ENCODE measurements at regions of chr17 and their contacts with region 1.

Region 1: GRCh38 chr17:1275962-1276736 is 3.3 kb upstream of the TRARG1 start:
- DNase-seq: peak; percentile 27
- ATAC-seq: peak; percentile 90
- H3K4me3 ChIP-seq: no peak overlapping the region
- H3K27ac ChIP-seq: no peak overlapping the region
- H3K4me1 ChIP-seq: no peaks in the 10 kb centered on the region
- H3K27me3 ChIP-seq: peaks cover 48% of the 10 kb centered on the region
- CTCF ChIP-seq: peak; percentile 81
- POLR2A ChIP-seq: no peak
- RAD21 ChIP-seq: peak; percentile 88

Region 2: DNA sequence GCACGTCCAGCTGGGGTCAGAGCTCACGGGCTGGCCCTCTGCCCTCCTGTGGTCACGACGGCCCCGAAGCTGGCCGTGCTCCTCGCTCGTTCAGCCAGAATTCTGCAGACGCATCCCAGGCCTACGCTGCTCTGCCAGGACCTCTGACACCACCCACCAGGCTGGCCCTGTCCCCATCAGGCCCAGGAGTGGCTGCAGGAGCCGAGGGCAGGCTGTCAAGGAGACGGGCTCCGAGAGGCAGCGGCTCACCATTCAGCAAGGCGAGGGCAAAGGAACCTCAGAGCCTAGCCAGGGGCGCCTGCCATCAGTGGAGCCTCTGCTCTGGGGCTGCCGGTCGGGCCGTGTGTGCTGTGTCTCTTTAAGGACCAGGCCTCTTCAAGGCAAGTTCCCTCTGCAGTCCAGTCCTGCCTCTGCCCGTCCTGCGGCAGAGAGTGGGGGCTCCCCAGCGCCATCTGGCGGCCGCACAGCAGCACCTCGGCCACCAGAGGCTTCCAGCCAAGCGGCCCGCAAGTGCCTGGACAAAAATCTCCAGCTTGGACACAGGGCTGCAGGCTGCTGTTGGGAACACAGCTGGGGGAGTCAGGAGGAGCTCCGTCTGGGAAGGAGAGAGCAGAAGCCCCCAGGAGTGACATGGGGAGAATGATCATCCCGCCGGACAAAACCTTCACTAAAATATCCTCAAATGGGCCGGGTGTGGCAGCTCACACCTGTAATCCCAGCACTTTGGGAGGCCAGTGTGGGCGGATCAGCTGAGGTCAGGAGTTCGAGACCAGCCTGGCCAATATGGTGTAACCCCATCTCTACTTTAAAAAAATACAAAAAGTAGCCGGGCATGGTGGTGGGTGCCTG is 89.0 kb before region 1 on chr17:
- CTCF ChIA-PET with region 1: no interaction called
- POLR2A ChIA-PET with region 1: no interaction called
- dilution Hi-C with region 1: no loop called
- in situ Hi-C with region 1: no loop called
- intact Hi-C with region 1: no loop called
- DNase-seq: peak; percentile 84
- ATAC-seq: peak; percentile 97
- H3K4me3 ChIP-seq: no peak overlapping the region
- H3K27ac ChIP-seq: no peak overlapping the region
- H3K4me1 ChIP-seq: peaks cover 6% of the 10 kb centered on the region
- H3K27me3 ChIP-seq: peaks cover 20% of the 10 kb centered on the region
- CTCF ChIP-seq: peak; percentile 98
- POLR2A ChIP-seq: 0 out of 2 replicates have a peak, but pooled peaks have one; percentile 35
- RAD21 ChIP-seq: peak; percentile 90

Region 3: DNA sequence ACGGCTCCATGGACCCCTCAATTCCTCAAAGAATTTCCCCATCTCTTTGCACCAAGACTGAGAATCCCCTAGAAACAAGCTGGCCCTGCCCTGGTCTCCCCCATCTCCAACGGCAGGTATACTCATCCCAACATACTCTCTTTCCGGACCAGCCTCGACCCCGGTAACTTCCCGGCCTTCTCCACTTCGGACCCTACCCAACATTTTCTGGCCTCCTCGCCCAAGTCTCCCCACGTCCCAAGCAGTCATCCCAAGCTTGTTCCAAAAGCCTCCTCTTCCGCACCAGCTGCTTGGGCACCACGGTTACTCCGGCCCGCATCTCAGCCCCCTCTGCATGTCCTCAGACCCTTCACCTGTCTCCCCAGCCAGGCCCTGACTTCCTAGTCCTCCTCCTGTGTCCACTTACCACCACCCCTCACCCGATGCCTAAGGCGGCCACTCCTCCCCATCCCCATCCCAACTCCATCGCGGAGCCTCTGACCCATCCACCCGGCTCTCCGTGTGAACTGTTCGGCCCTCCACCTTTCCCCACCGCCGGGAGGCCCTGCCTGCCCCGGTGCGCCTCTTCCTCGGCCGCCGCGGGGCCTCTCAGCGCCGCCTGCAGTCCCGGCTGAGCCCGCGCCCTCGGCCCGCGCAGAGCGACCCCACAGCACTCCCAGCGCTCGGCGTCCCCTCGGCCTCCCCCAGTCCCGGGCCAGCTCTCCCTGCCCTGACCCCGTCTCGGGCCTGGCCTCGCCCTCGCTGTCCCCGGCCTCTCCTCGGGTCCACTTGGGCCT is 285.4 kb after region 1 on chr17:
- CTCF ChIA-PET with region 1: no interaction called
- POLR2A ChIA-PET with region 1: no interaction called
- dilution Hi-C with region 1: no loop called
- in situ Hi-C with region 1: no loop called
- intact Hi-C with region 1: loop called (anchors 5 kb)
- DNase-seq: no peak
- ATAC-seq: peak; percentile 47
- H3K4me3 ChIP-seq: peak overlapping the region; percentile 99
- H3K27ac ChIP-seq: peak overlapping the region; percentile 77
- H3K4me1 ChIP-seq: peaks cover 9% of the 10 kb centered on the region; the same call in 1 of the 2 replicates
- H3K27me3 ChIP-seq: no peaks in the 10 kb centered on the region
- CTCF ChIP-seq: peak; percentile 39
- POLR2A ChIP-seq: no peak
- RAD21 ChIP-seq: peak; percentile 18; the same call in 1 of the 2 replicates